OCI-LY7 (cell line): ENCODE measurements at regions of chr3 and their contacts with region 1.

Region 1: GRCh38 chr3:58217209-58217811 is 6.5 kb upstream of the DNASE1L3 start:
- DNase-seq: peak; percentile 84
- H3K4me3 ChIP-seq: peak overlapping the region; percentile 24
- H3K27ac ChIP-seq: no peak overlapping the region
- H3K4me1 ChIP-seq: peaks cover 22% of the 10 kb centered on the region
- CTCF ChIP-seq: peak; percentile 92

Region 2: DNA sequence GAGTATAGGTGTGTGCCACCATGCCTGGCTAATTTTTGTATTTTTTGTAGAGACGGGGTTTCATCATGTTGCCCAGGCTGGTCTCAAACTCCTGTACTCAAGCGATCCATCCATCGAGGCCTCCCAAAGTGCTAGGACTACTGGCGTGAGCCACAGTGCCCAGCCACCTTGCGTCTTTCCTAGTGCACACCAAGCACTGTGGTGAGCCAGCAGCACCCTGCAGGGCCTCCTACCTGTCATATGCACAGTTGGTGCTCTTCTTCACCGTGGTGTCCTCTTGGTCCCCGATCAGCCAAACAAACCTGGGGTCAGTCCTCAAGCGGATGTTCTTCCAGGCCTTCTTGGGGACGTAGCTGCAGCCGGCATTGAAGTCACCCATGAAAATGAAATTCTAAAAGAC is 19.7 kb before region 1 on chr3:
- CTCF ChIA-PET with region 1: interaction called, 7 read pairs
- POLR2A ChIA-PET with region 1: interaction called, 26 read pairs
- intact Hi-C with region 1: loop called (anchors 2 kb)
- DNase-seq: no peak
- H3K4me3 ChIP-seq: no peak overlapping the region
- H3K27ac ChIP-seq: no peak overlapping the region
- H3K4me1 ChIP-seq: peaks cover 26% of the 10 kb centered on the region
- CTCF ChIP-seq: no peak

Region 3: GRCh38 chr3:58202917-58203360 is 14.4 kb before region 1 on chr3:
- CTCF ChIA-PET with region 1: interaction called, 7 read pairs
- POLR2A ChIA-PET with region 1: interaction called, 26 read pairs
- intact Hi-C with region 1: no loop called
- DNase-seq: peak; percentile 10
- H3K4me3 ChIP-seq: no peak overlapping the region
- H3K27ac ChIP-seq: no peak overlapping the region
- H3K4me1 ChIP-seq: peaks cover 17% of the 10 kb centered on the region
- CTCF ChIP-seq: no peak

Region 4: DNA sequence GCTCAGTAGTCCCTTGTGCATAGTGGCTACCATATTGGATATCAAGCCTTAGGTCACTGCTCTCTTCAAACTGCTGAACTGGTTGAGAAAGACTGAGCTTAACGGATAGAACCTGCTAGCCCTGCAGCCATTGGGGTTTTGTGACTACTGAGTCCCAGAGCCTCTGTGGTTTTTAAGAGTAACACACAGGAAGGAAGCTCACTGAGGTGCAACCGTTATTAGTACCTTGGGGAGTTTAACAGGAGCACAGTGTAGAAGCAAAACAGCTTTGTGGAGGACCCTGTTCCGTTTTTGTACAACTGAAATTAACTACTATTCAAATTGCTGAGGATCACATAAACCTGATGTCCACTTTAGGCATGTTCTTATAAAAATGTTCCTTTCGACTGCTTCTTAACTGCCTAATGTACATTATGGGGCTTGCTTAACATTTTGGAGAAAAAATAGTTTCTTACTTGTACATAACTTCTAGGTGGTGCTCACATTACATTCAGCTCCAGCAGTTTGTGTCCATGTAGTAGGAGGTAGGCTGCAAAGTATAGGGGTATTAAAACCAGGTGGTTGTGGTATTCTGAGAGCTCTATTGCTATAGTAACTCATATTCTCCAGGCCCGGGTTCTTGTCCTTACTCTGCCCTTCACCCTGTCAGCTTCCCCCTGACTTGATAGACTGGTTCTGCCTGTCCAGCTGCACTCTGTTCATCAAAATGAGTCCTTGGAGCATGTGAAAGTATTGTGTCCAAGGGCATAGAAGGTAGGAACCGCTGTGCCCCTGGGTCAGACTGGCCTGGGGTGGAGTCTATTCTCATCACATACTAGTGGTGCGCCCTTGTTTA is 132.7 kb after region 1 on chr3:
- CTCF ChIA-PET with region 1: no interaction called
- POLR2A ChIA-PET with region 1: no interaction called
- intact Hi-C with region 1: no loop called
- DNase-seq: peak; percentile 98
- H3K4me3 ChIP-seq: peak overlapping the region; percentile 62
- H3K27ac ChIP-seq: peak overlapping the region; percentile 99
- H3K4me1 ChIP-seq: peaks cover 98% of the 10 kb centered on the region
- CTCF ChIP-seq: no peak